ENCODE measurements at regions of chr3 and their contacts with region 1.

Region 1: DNA sequence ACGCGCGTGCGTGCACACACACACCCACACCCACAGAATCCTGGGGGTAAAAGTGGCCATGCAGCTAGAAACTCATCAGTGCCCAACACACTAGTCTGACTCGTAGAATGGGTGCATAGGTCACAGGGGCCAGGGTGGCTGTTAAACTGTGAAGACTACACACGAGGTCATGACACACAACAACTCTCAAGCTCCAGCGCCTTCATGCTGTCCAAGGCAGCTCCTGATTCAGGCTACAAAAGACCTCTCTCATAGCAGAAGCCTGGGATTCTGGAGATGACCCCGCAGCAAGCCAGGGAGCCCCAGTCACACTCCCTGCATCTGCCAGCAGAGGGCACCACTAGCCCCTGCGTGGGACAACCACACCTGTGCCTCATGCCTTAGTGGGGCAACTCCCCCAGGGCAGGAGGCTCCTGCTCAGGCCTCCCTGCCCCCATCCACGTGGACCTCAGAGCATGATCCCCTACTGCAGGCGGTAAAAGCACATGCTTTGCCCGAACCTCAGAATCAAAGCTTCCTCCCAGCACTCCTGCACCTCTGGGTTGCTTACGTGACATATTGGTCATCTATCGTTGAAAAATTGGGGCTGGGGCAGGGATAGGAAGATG is 93.1 kb downstream of the LRIG1 start:
- DNase-seq: peak; percentile 78 to 88
- ATAC-seq: peak; percentile 72 to 74 (median 73)
- H3K4me3 ChIP-seq: no peak overlapping the region
- H3K27ac ChIP-seq: peak overlapping the region; percentile 72
- H3K4me1 ChIP-seq: peaks cover 60% of the 10 kb centered on the region
- H3K27me3 ChIP-seq: no peaks in the 10 kb centered on the region
- CTCF ChIP-seq: peak; percentile 93

Region 2: GRCh38 chr3:66816090-66816761 is 408.5 kb after region 1 on chr3:
- intact Hi-C with region 1: loop called (anchors 2 to 5 kb)
- DNase-seq: no peak
- ATAC-seq: peak; percentile 84 to 95 (median 89)
- H3K4me3 ChIP-seq: no peak overlapping the region
- H3K27ac ChIP-seq: no peak overlapping the region
- H3K4me1 ChIP-seq: no peaks in the 10 kb centered on the region
- H3K27me3 ChIP-seq: no peaks in the 10 kb centered on the region
- CTCF ChIP-seq: peak; percentile 72

Region 3: DNA sequence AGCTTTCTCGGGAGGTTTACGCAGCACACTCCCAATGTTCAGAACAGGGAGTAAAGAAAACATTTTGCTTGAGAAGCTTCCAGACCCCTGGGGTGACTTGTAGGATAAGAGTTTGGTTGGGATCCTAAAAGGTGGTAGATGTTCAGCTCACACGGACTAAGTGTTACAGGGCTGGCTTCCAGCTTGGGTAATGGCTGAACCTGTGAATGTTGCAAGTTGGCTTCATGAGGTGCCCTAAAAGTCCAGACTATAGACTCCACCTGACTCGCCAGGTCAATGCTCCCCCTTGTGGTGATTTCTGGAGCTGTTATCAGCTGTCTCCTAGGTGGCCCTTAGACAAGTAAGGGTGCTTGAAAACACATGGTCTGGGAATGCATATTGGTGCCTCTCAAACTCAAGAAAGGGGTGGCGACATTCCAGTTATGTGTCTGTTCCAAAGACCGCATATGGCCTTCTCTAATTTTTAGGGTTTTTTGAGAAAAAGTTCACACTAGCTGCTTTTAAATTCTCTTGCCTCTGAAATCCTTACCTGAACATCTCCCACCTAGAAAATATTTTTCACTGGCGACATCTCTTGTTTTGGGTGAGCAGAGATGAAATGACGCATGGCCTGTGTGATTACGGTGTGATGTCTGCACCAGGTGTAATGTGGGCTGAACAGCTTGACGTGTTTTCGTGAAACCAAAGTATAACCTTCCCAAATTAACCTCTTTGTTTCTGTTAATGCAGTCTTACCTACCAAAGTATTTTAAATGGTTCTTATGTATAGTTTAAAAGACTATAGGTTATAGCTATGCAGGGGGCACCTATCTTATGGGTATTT is 414.7 kb after region 1 on chr3:
- intact Hi-C with region 1: loop called in 1 of 2 experiments (anchors 5 kb)
- DNase-seq: peak; percentile 22 to 66
- ATAC-seq: peak; percentile 83 to 95 (median 88)
- H3K4me3 ChIP-seq: no peak overlapping the region
- H3K27ac ChIP-seq: no peak overlapping the region
- H3K4me1 ChIP-seq: no peaks in the 10 kb centered on the region
- H3K27me3 ChIP-seq: no peaks in the 10 kb centered on the region
- CTCF ChIP-seq: peak; percentile 77